ENCODE measurements at regions of chr1 and their contacts with region 1.

Region 1: GRCh38 chr1:77514921-77515776 is 167.3 kb downstream of the ZZZ3 start:
- DNase-seq: peak; percentile 54
- ATAC-seq: peak; percentile 58
- H3K4me3 ChIP-seq: no peak overlapping the region
- H3K27ac ChIP-seq: peak overlapping the region; percentile 94
- H3K4me1 ChIP-seq: peaks cover 23% of the 10 kb centered on the region
- H3K27me3 ChIP-seq: no peaks in the 10 kb centered on the region
- CTCF ChIP-seq: 0 out of 2 replicates have a peak, but pooled peaks have one; percentile 22
- POLR2A ChIP-seq: no peak
- RAD21 ChIP-seq: no peak

Region 2: GRCh38 chr1:77281491-77282186 is 233.5 kb before region 1 on chr1 and contains the start of gene AK5:
- CTCF ChIA-PET with region 1: no interaction called
- POLR2A ChIA-PET with region 1: no interaction called
- dilution Hi-C with region 1: no loop called
- in situ Hi-C with region 1: no loop called
- intact Hi-C with region 1: loop called (anchors 5 kb)
- DNase-seq: peak; percentile 48
- ATAC-seq: peak; percentile 92
- H3K4me3 ChIP-seq: peak within 1 kb of the TSS; percentile 91
- H3K27ac ChIP-seq: peak within 1 kb of the TSS; percentile 56
- H3K4me1 ChIP-seq: 0 out of 2 replicates have a peak, but pooled peaks cover 2% of the 10 kb centered on the region
- H3K27me3 ChIP-seq: no peaks in the 10 kb centered on the region
- CTCF ChIP-seq: no peak
- POLR2A ChIP-seq: no peak
- RAD21 ChIP-seq: no peak
- total RNA-seq, gene AK5: 25.8 and 54.7 TPM in 2 replicates

Region 3: GRCh38 chr1:77370583-77371306 is 144.4 kb before region 1 on chr1:
- CTCF ChIA-PET with region 1: interaction called, 4 read pairs
- POLR2A ChIA-PET with region 1: no interaction called
- dilution Hi-C with region 1: no loop called
- in situ Hi-C with region 1: no loop called
- intact Hi-C with region 1: loop called (anchors 2 kb)
- DNase-seq: peak; percentile 99
- ATAC-seq: peak; percentile 96
- H3K4me3 ChIP-seq: no peak overlapping the region
- H3K27ac ChIP-seq: peak overlapping the region; percentile 93
- H3K4me1 ChIP-seq: peaks cover 10% of the 10 kb centered on the region
- H3K27me3 ChIP-seq: no peaks in the 10 kb centered on the region
- CTCF ChIP-seq: no peak
- POLR2A ChIP-seq: no peak
- RAD21 ChIP-seq: peak; percentile 4; the same call in 1 of the 2 replicates

Region 4: DNA sequence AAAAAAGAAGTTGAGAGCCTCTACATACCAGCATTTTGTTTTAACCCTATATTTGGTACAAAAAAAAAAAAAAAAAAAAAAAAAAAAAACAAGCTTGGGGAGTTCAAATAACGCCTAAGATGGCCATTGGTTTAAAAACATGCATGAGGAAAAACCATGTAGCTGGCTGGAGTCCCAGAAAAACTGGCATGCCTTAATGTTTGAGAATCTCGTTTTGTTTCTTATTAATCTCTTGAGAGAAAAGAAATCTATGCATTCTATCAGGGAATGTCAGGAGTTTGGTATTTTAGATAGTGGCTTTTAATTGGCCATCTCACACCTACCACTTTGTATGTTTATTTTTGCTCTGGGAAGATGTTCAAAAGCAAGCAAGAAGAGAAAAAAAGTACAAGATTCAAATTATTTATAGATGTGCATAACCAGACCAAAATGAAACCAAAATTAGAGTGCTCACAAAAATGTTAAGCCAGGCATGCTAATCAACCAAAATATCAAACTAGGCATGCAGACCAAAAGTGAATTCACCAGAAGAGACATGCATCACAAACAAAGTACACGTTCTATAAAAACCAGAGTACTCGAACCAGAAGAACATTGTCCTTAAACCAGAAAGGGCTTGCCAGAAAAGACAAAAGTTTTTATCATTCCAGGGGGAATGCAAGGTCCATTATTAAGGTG is 76.8 kb before region 1 on chr1:
- CTCF ChIA-PET with region 1: interaction called, 3 read pairs
- POLR2A ChIA-PET with region 1: no interaction called
- dilution Hi-C with region 1: no loop called
- in situ Hi-C with region 1: no loop called
- intact Hi-C with region 1: loop called (anchors 2 kb)
- DNase-seq: peak; percentile 79
- ATAC-seq: peak; percentile 76
- H3K4me3 ChIP-seq: peak overlapping the region; percentile 37; the same call in 1 of the 2 replicates
- H3K27ac ChIP-seq: peak overlapping the region; percentile 80; the same call in 1 of the 2 replicates
- H3K4me1 ChIP-seq: peaks cover 7% of the 10 kb centered on the region
- H3K27me3 ChIP-seq: no peaks in the 10 kb centered on the region
- CTCF ChIP-seq: no peak
- POLR2A ChIP-seq: no peak
- RAD21 ChIP-seq: no peak

Region 5: GRCh38 chr1:77545970-77546369 is 30.8 kb after region 1 on chr1:
- CTCF ChIA-PET with region 1: no interaction called
- POLR2A ChIA-PET with region 1: no interaction called
- dilution Hi-C with region 1: no loop called
- in situ Hi-C with region 1: no loop called
- intact Hi-C with region 1: no loop called
- DNase-seq: peak; percentile 54
- ATAC-seq: peak; percentile 55
- H3K4me3 ChIP-seq: no peak overlapping the region
- H3K27ac ChIP-seq: peak overlapping the region; percentile 25; the same call in 1 of the 2 replicates
- H3K4me1 ChIP-seq: peaks cover 12% of the 10 kb centered on the region
- H3K27me3 ChIP-seq: no peaks in the 10 kb centered on the region
- CTCF ChIP-seq: no peak
- POLR2A ChIP-seq: no peak
- RAD21 ChIP-seq: no peak

Region 6: GRCh38 chr1:77857552-77857951 is 342.4 kb after region 1 on chr1:
- CTCF ChIA-PET with region 1: no interaction called
- POLR2A ChIA-PET with region 1: no interaction called
- dilution Hi-C with region 1: no loop called
- in situ Hi-C with region 1: no loop called
- intact Hi-C with region 1: no loop called
- DNase-seq: peak; percentile 57
- ATAC-seq: peak; percentile 71
- H3K4me3 ChIP-seq: no peak overlapping the region
- H3K27ac ChIP-seq: peak overlapping the region; percentile 63; the same call in 1 of the 2 replicates
- H3K4me1 ChIP-seq: peaks cover 2% of the 10 kb centered on the region; the same call in 1 of the 2 replicates
- H3K27me3 ChIP-seq: no peaks in the 10 kb centered on the region
- CTCF ChIP-seq: no peak
- POLR2A ChIP-seq: no peak
- RAD21 ChIP-seq: no peak

Measured in IMR-90 (cell line).